AG04449 (cell line): ENCODE measurements at regions of chr20 and their contacts with region 1.

Region 1: GRCh38 chr20:24992487-24993205 is at the start of gene APMAP:
- DNase-seq: peak; percentile 24
- H3K4me3 ChIP-seq: peak within 1 kb of the TSS; percentile 94
- CTCF ChIP-seq: no peak

Region 2: DNA sequence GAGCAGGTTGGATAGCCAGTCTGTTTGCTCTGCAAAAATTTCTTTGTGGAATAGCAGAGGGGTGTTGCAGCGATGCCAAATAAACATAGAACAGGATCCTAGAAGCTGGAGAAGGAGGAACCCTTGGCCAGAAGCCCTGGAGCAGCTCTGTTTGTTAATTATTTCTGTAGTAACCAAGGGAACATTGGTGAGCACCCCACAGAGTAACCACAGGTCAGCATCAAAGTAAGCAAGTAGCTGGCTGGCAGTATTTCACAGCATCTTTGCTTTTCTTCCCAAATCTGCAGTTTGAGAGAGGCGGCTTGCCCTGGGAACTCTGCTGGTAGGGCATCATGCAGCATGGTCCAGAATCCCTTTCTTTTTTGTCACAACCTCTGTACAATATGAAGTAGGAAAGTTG is 12.6 kb after region 1 on chr20:
- CTCF ChIA-PET with region 1: interaction called, 24 read pairs
- POLR2A ChIA-PET with region 1: interaction called, 3 read pairs
- DNase-seq: no peak
- H3K4me3 ChIP-seq: no peak overlapping the region
- CTCF ChIP-seq: no peak

Region 3: GRCh38 chr20:25042531-25043498 is 50.2 kb after region 1 on chr20:
- CTCF ChIA-PET with region 1: no interaction called
- POLR2A ChIA-PET with region 1: no interaction called
- DNase-seq: no peak
- H3K4me3 ChIP-seq: no peak overlapping the region
- CTCF ChIP-seq: no peak

Region 4: GRCh38 chr20:25065625-25066338 is 73.1 kb after region 1 on chr20:
- CTCF ChIA-PET with region 1: interaction called, 382 read pairs
- POLR2A ChIA-PET with region 1: interaction called, 3 read pairs
- DNase-seq: no peak
- H3K4me3 ChIP-seq: no peak overlapping the region
- CTCF ChIP-seq: peak; percentile 79

Region 5: GRCh38 chr20:25072226-25072811 is 79.7 kb after region 1 on chr20:
- CTCF ChIA-PET with region 1: interaction called, 33 read pairs
- POLR2A ChIA-PET with region 1: no interaction called
- DNase-seq: no peak
- H3K4me3 ChIP-seq: no peak overlapping the region
- CTCF ChIP-seq: no peak

Region 6: DNA sequence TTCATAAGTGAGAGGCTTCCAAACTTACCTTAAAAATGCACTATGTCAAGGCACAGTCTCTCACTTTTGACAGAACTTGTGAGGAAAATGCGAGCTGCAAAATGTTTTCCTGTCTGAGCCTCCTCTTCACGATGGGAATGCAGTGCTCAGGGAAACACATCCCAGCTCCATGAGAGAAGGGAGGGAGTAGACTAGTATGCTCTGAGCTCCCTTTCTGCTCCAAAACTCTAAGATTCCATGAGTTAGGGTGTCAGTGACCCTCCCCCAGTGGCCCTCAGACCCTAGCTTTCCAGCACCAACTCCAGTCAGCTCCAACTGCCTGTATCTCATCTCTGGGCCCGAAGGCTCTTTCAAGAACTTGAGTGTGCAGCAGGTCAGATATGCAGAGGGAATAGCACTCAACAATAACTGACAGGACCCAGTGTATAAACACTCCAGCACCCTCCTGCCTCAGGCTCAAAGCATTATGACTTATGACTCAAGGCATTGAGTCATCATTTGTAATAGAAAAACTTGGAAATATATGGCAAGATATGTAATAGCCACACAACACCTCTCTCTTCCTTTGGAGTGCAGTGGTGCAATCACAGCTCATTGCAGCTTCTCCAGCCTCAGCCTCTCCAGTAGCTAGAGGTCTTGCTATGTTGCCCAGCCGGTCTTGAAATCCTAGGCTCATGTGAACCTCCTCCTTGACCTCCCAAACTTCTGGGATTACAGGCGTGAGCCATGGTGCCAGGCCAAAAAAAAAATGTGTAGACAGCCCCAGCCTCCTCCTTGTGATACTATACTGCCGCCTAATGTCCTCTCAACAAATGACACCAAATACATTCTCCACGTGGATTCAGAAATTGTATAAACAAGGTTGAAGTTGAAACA is 186.2 kb after region 1 on chr20:
- CTCF ChIA-PET with region 1: interaction called, 39 read pairs
- POLR2A ChIA-PET with region 1: no interaction called
- DNase-seq: peak; percentile 31
- H3K4me3 ChIP-seq: no peak overlapping the region; the same call in 1 of the 2 replicates
- CTCF ChIP-seq: peak; percentile 66